Astrocyte of the cerebellum (primary cell): ENCODE measurements at regions of chr15 and their contacts with region 1.

Region 1: GRCh38 chr15:85412956-85413854 is 32.8 kb downstream of the AKAP13 start:
- DNase-seq: peak; percentile 69
- H3K4me3 ChIP-seq: no peak overlapping the region
- CTCF ChIP-seq: no peak

Region 2: GRCh38 chr15:85337425-85338074 is 75.7 kb before region 1 on chr15:
- in situ Hi-C with region 1: loop called (anchors 5 kb)
- DNase-seq: no peak
- H3K4me3 ChIP-seq: no peak overlapping the region
- CTCF ChIP-seq: no peak